GM12878 (cell line): ENCODE measurements at regions of chr15 and their contacts with region 1.

Region 1: DNA sequence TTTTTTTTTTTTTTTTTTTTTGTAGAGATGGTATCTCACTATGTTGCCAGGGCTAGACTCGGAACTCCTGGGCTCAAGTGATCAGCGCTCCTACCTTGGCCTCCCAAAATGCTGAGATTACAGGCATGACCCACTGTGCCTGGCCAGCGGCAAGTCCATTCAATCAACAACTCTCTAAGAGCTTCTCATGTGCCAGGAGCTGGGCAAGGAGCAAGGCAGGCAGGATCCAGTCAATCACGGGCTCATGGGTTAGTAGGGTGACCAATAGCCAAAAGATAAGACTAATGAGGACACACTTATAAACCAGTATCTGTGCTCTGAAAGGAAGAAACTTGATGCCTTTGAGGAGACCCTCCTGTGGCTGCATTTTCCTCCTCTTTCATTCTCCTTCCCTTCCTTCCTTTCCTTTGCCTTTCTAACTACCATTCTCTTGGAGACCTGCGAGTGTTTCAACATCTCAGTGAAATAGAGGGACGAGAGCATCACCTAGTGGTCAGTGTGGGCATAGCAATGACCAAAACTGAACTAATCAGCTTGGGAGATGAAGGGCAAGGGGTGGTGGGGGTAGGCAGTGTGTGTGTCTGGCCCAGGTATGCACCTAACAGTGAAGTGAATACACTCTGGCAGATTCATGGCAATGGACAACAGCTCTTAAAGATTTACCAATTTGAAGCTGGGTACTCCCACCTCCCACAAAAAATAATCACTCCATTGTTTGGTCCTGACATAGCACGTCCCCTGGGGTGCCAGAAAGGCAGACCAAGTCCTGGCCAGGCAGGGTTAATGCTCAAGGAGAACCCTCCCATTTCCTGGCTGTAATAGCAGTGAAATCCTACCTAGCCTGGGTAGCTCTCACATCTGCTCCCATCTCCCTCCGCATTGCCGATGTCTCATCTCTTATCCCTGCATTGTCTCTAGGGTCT is 6.2 kb downstream of the RPP25 start:
- DNase-seq: peak; percentile 53
- ATAC-seq: peak; percentile 93
- H3K4me3 ChIP-seq: no peak overlapping the region
- H3K27ac ChIP-seq: no peak overlapping the region
- H3K4me1 ChIP-seq: no peaks in the 10 kb centered on the region; the same call in none of the 2 replicates
- H3K27me3 ChIP-seq: no peaks in the 10 kb centered on the region
- CTCF ChIP-seq: peak; percentile 99 to 100 (median 99); a peak in 5 of 6 replicates
- EP300 ChIP-seq: no peak
- POLR2A ChIP-seq: no peak
- RAD21 ChIP-seq: peak; percentile 99

Region 2: GRCh38 chr15:74695597-74696397 is 254.5 kb before region 1 on chr15 and contains the start of gene EDC3:
- CTCF ChIA-PET with region 1: no interaction called
- POLR2A ChIA-PET with region 1: no interaction called
- RAD21 ChIA-PET with region 1: no interaction called
- SMC1A ChIA-PET with region 1: no interaction called
- in situ Hi-C with region 1: no loop called
- intact Hi-C with region 1: no loop called
- DNase-seq: peak; percentile 40
- ATAC-seq: peak; percentile 95
- H3K4me3 ChIP-seq: peak within 1 kb of the TSS; percentile 83
- H3K27ac ChIP-seq: peak within 1 kb of the TSS; percentile 89
- H3K4me1 ChIP-seq: peaks cover 9% of the 10 kb centered on the region
- H3K27me3 ChIP-seq: no peaks in the 10 kb centered on the region
- CTCF ChIP-seq: no peak
- EP300 ChIP-seq: no peak
- POLR2A ChIP-seq: peak; percentile 85
- RAD21 ChIP-seq: no peak
- polyA plus RNA-seq, gene EDC3: 16.0 to 18.5 TPM

Region 3: DNA sequence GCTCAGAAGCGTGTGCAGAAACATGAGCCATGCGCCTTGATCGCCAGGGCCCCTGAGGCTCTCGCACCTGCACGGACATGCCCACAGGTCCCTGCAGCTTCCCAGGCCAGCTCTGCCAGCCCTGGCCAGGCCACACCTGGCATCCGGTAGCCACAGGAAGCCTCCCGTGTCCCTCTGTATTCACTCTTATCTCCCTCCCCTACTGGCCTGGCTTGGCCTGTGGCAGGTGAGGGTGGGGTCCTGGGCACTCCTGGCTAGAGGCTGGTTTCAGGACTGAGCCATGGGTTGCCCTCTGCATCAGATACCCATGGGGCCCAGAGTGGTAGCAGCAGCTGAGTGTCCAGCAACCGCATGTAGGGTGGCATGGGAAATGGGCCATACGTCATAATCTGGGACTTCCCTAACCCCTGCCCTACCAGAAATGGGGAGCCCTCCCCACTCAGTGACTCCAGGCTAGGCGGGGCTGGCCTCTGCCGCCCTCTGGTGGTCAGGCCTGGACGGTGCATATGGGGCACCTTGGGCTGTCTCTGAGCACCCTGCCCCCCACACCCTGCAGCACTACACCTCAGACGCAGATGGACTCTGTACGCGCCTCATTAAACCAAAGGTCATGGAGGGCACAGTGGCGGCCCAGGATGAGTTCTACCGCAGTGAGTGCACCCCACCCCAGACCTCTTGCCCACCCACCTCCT is 150.3 kb before region 1 on chr15:
- CTCF ChIA-PET with region 1: interaction called, 12 read pairs
- POLR2A ChIA-PET with region 1: no interaction called
- RAD21 ChIA-PET with region 1: interaction called, 4 read pairs
- SMC1A ChIA-PET with region 1: no interaction called
- in situ Hi-C with region 1: no loop called
- intact Hi-C with region 1: loop called (anchors 1 kb)
- DNase-seq: peak; percentile 76
- ATAC-seq: peak; percentile 94
- H3K4me3 ChIP-seq: no peak overlapping the region
- H3K27ac ChIP-seq: peak overlapping the region; percentile 39
- H3K4me1 ChIP-seq: peaks cover 38% of the 10 kb centered on the region
- H3K27me3 ChIP-seq: no peaks in the 10 kb centered on the region
- CTCF ChIP-seq: peak; percentile 97 to 99 (median 99); a peak in 5 of 6 replicates
- EP300 ChIP-seq: 0 out of 4 replicates have a peak, but pooled peaks of 1 of the 2 experiments have one; percentile 60
- POLR2A ChIP-seq: peak; percentile 69
- RAD21 ChIP-seq: peak; percentile 93

Region 4: DNA sequence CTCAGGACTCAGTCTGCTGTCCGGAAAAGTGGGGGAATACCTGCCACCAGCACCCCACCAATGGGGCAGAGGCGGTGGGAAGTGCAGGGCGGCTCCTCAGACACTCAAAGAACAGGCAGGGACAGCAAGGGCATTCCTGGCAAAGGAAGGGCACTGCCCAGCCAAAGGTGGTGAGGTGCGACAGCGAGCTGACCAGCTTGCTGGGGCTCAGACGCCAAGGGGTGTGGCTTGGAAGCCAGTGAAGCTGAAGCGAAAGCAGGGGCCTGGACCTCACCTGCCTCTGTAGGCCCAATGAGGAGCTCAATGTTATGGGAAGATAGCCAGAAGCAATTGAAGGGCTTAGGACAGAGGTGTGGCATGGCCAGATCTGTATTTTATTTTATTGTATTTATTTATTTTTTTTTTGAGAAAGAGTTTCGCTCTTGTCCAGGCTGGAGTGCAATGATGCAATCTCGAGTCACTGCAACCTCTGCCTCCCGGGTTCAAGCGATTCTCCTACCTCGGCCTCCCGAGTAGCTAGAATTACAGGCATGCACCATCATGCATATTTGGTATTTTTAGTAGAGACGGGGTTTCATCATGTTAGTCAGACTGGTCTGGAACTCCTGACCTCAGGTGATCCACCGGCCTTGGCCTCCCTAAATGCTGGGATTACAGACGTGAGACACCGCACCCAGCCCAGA is 142.1 kb before region 1 on chr15:
- CTCF ChIA-PET with region 1: interaction called, 11 read pairs
- POLR2A ChIA-PET with region 1: no interaction called
- RAD21 ChIA-PET with region 1: interaction called, 4 read pairs
- SMC1A ChIA-PET with region 1: interaction called, 3 read pairs
- in situ Hi-C with region 1: no loop called
- intact Hi-C with region 1: no loop called
- DNase-seq: no peak
- ATAC-seq: peak; percentile 51
- H3K4me3 ChIP-seq: no peak overlapping the region
- H3K27ac ChIP-seq: no peak overlapping the region
- H3K4me1 ChIP-seq: no peaks in the 10 kb centered on the region
- H3K27me3 ChIP-seq: no peaks in the 10 kb centered on the region
- CTCF ChIP-seq: no peak
- EP300 ChIP-seq: no peak
- POLR2A ChIP-seq: peak; percentile 57; the same call in 1 of the 2 replicates
- RAD21 ChIP-seq: no peak

Region 5: GRCh38 chr15:74937596-74938296 is 12.6 kb before region 1 on chr15 and contains the start of gene COX5A:
- CTCF ChIA-PET with region 1: interaction called, 18 read pairs
- POLR2A ChIA-PET with region 1: interaction called, 4 read pairs
- RAD21 ChIA-PET with region 1: no interaction called
- SMC1A ChIA-PET with region 1: interaction called, 6 read pairs
- in situ Hi-C with region 1: no loop called
- intact Hi-C with region 1: no loop called
- DNase-seq: peak; percentile 75
- ATAC-seq: peak; percentile 95
- H3K4me3 ChIP-seq: peak within 1 kb of the TSS; percentile 83
- H3K27ac ChIP-seq: peak within 1 kb of the TSS; percentile 91
- H3K4me1 ChIP-seq: peaks cover 4% of the 10 kb centered on the region
- H3K27me3 ChIP-seq: no peaks in the 10 kb centered on the region
- CTCF ChIP-seq: no peak
- EP300 ChIP-seq: no peak
- POLR2A ChIP-seq: peak; percentile 97
- RAD21 ChIP-seq: no peak
- polyA plus RNA-seq, gene COX5A: 84.5 to 350 TPM

Region 6: DNA sequence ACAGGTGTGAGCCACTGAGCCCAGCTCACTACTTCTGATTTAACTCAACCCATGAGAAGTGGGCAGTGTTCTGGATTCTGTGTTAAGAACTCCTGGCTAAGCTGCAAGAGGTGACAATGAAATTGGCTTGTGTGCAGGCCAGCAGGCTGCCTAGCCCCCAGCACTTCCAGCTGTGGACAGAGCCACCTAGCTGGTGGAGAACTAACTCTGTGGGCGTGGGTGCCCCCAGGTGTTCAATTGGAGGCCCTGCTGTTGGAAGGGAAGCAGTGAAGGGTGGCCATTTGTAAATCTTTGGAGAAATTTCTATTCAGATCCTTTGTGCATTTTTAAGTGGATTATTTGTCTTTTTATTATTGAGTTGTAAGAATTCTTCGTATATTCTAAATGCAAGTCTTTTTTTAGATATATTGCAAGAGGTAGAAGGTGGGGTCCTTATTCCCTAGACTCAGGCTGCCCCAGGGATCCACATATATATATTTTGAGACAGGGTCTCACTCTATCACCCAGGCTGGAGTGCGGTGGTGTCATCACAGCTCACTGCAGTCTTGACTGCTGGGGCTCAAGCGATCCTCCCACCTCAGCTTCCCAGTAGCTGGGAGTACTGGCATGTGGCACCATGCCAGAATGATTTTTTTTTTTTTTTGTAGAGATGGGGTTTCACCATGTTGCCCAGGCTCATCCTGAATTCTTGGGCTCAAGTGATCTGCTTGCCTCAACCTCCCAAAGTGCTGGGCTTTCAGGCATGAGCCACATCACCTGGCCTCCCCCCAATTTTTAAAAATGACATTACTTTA is 37.9 kb after region 1 on chr15:
- CTCF ChIA-PET with region 1: interaction called, 10 read pairs
- POLR2A ChIA-PET with region 1: no interaction called
- RAD21 ChIA-PET with region 1: no interaction called
- SMC1A ChIA-PET with region 1: interaction called, 6 read pairs
- in situ Hi-C with region 1: no loop called
- intact Hi-C with region 1: loop called (anchors 2 kb)
- DNase-seq: no peak
- ATAC-seq: peak; percentile 87
- H3K4me3 ChIP-seq: no peak overlapping the region
- H3K27ac ChIP-seq: no peak overlapping the region
- H3K4me1 ChIP-seq: peaks cover 8% of the 10 kb centered on the region
- H3K27me3 ChIP-seq: no peaks in the 10 kb centered on the region
- CTCF ChIP-seq: peak; percentile 59 to 64 (median 59)
- EP300 ChIP-seq: no peak
- POLR2A ChIP-seq: no peak
- RAD21 ChIP-seq: peak; percentile 60